ENCODE measurements at regions of chr6 and their contacts with region 1.

Region 1: GRCh38 chr6:112010328-112010727 is 43.6 kb upstream of the CCN6 start:
- DNase-seq: no peak
- H3K4me3 ChIP-seq: no peak overlapping the region
- H3K27ac ChIP-seq: no peak overlapping the region
- H3K4me1 ChIP-seq: no peaks in the 10 kb centered on the region
- H3K27me3 ChIP-seq: no peaks in the 10 kb centered on the region
- CTCF ChIP-seq: peak in 1 of 3 experiments; percentile 11; a peak in 1 of 4 replicates
- EP300 ChIP-seq: no peak
- POLR2A ChIP-seq: no peak
- RAD21 ChIP-seq: peak in 1 of 2 experiments; percentile 31; a peak in 2 of 4 replicates

Region 2: GRCh38 chr6:111997078-111997852 is 13.1 kb before region 1 on chr6:
- CTCF ChIA-PET with region 1: interaction called, 18 read pairs
- POLR2A ChIA-PET with region 1: interaction called, 3 read pairs
- DNase-seq: peak; percentile 64 to 85
- H3K4me3 ChIP-seq: no peak overlapping the region
- H3K27ac ChIP-seq: no peak overlapping the region
- H3K4me1 ChIP-seq: peaks cover 0 to 6% (median 1%) of the 10 kb centered on the region in 4 experiments; a peak in 1 of 7 replicates
- H3K27me3 ChIP-seq: no peaks in the 10 kb centered on the region
- CTCF ChIP-seq: peak; percentile 82 to 93 (median 92)
- EP300 ChIP-seq: no peak
- POLR2A ChIP-seq: no peak
- RAD21 ChIP-seq: peak; percentile 100

Measured in H1 (cell line).